CD4-positive, alpha-beta T cell (primary cell): ENCODE measurements at regions of chr7 and their contacts with region 1.

Region 1: DNA sequence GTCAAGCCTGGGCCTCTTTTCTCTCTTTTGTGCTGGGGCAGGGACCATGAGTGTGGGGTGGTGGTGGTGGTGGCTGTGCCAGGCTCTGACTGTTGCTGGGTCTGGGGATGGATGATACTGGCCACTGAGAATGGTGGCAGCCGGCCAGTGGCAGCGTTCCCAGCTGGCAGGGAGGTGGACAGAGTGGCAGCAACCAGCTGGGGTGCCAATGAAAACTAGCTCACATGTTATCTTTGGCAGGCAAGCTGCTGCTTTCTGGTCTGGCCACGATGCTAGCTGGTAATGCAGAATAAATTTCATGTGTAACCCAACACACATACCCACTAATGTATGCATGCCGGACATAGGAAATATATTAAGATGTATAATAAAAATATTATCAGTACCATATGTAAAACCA is 95.0 kb upstream of the SLC26A5 start:
- DNase-seq: no peak
- ATAC-seq: no peak
- H3K4me3 ChIP-seq: no peak overlapping the region
- H3K4me3 Mint-ChIP-seq: no peak overlapping the region
- H3K27ac ChIP-seq: no peak overlapping the region
- H3K27ac Mint-ChIP-seq: no peak overlapping the region
- H3K4me1 ChIP-seq: no peaks in the 10 kb centered on the region
- H3K4me1 Mint-ChIP-seq: no peaks in the 10 kb centered on the region
- H3K27me3 ChIP-seq: peaks cover 0 to 8% of the 10 kb centered on the region in 2 experiments
- H3K27me3 Mint-ChIP-seq: peaks cover 24% of the 10 kb centered on the region
- CTCF ChIP-seq: no peak

Region 2: DNA sequence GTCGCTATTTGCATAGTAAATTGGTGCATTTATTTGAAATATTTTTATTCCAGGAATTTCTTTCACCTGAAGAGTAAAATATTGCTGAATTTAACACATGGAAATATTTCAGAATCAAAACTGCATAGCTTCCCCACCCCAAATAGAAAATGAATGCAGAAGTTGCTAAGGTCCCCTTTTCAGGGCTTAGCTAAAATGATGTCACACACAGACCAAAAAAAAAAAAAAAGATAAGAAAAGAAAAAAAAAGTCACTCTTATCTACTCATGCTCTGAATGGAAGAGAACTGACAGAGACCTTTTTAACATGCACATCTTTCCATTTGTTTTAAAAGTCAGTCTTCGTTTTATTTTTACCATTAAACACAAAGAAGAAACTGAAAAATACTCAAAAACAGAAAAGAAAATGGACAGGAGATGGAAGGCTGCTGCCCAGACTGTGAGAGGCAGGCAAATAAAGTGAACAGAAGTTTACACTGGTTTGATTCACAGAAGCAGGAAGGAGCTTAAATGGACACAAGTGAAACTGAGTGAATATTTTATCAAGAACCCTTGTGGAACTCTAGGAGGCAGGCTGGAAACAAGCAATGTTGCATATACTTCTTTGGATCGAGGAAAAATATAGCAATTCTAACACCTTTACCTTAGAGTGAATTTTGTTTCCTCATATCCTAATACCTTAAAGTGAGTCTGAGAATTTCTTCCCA is 161.6 kb before region 1 on chr7:
- CTCF ChIA-PET with region 1: no interaction called
- POLR2A ChIA-PET with region 1: no interaction called
- intact Hi-C with region 1: no loop called
- DNase-seq: no peak
- ATAC-seq: no peak
- H3K4me3 ChIP-seq: no peak overlapping the region
- H3K4me3 Mint-ChIP-seq: no peak overlapping the region
- H3K27ac ChIP-seq: no peak overlapping the region
- H3K27ac Mint-ChIP-seq: no peak overlapping the region
- H3K4me1 ChIP-seq: no peaks in the 10 kb centered on the region
- H3K4me1 Mint-ChIP-seq: no peaks in the 10 kb centered on the region
- H3K27me3 ChIP-seq: no peaks in the 10 kb centered on the region
- H3K27me3 Mint-ChIP-seq: peaks cover 8% of the 10 kb centered on the region
- CTCF ChIP-seq: no peak

Region 3: GRCh38 chr7:103432712-103433111 is 108.3 kb before region 1 on chr7:
- CTCF ChIA-PET with region 1: no interaction called
- POLR2A ChIA-PET with region 1: no interaction called
- intact Hi-C with region 1: no loop called
- DNase-seq: no peak
- ATAC-seq: no peak
- H3K4me3 ChIP-seq: no peak overlapping the region
- H3K4me3 Mint-ChIP-seq: no peak overlapping the region
- H3K27ac ChIP-seq: no peak overlapping the region
- H3K27ac Mint-ChIP-seq: no peak overlapping the region
- H3K4me1 ChIP-seq: no peaks in the 10 kb centered on the region
- H3K4me1 Mint-ChIP-seq: no peaks in the 10 kb centered on the region
- H3K27me3 ChIP-seq: peaks cover 4 to 10% of the 10 kb centered on the region in 2 experiments
- H3K27me3 Mint-ChIP-seq: peaks cover 36% of the 10 kb centered on the region
- CTCF ChIP-seq: no peak

Region 4: GRCh38 chr7:103524042-103524907 is 16.8 kb before region 1 on chr7:
- CTCF ChIA-PET with region 1: interaction called, 10 read pairs
- POLR2A ChIA-PET with region 1: no interaction called
- intact Hi-C with region 1: no loop called
- DNase-seq: peak in 1 of 14 experiments; percentile 0
- ATAC-seq: no peak
- H3K4me3 ChIP-seq: no peak overlapping the region
- H3K4me3 Mint-ChIP-seq: no peak overlapping the region
- H3K27ac ChIP-seq: no peak overlapping the region
- H3K27ac Mint-ChIP-seq: no peak overlapping the region
- H3K4me1 ChIP-seq: no peaks in the 10 kb centered on the region
- H3K4me1 Mint-ChIP-seq: no peaks in the 10 kb centered on the region
- H3K27me3 ChIP-seq: peaks cover 0 to 2% of the 10 kb centered on the region in 2 experiments
- H3K27me3 Mint-ChIP-seq: peaks cover 32% of the 10 kb centered on the region
- CTCF ChIP-seq: no peak

Region 5: DNA sequence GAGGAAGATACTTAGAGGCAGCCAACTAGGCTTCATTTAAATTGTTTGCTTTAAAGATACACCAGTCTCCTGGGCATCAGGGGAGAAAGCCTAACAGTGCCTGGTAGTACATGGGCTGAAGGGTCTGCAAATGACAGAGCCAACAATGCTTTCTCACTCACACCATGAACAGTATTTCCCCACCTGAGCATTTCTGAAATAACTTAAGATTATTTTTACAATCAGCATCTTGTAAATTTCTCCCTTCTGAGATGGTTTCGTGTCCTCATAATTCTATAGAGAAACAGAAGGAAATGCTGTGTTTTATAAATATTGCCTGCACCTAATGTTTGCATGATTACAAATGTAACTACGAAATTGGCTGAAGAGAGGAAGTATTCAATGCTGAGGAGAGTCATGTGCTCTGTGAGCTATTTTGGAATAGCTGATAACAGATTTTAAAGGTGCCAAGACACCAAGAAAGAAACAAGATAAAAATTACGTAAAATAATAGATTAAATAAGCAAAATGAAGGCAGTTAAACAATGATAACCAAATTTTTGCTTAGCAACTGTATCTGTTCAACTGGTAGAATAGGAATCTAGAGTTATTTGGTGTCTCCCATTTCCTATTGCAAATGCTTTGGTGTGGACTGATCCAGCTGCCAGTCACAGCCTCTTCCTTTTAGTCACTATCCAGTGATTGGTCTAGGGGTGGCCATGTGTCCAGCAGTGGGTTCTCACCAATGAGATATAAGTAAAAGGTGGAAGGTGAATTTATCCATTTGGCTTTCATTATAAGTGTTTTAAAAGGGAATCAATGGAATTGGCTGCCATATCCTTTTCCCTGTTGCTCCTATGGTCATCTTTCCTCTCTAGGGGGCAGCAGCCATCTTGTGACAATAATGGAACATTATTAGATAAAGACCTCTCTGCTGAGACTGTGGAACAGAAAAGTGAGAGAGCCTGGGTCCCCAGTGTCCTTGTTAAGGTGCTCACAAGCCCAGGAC is 72.9 kb after region 1 on chr7:
- CTCF ChIA-PET with region 1: no interaction called
- POLR2A ChIA-PET with region 1: no interaction called
- intact Hi-C with region 1: no loop called
- DNase-seq: no peak
- ATAC-seq: no peak
- H3K4me3 ChIP-seq: no peak overlapping the region
- H3K4me3 Mint-ChIP-seq: no peak overlapping the region
- H3K27ac ChIP-seq: no peak overlapping the region
- H3K27ac Mint-ChIP-seq: no peak overlapping the region
- H3K4me1 ChIP-seq: no peaks in the 10 kb centered on the region
- H3K4me1 Mint-ChIP-seq: no peaks in the 10 kb centered on the region
- H3K27me3 ChIP-seq: no peaks in the 10 kb centered on the region
- H3K27me3 Mint-ChIP-seq: peaks cover 19% of the 10 kb centered on the region
- CTCF ChIP-seq: no peak